Activated CD4-positive, alpha-beta T cell treated with anti-CD3 and anti-CD28 coated beads for 36 hours (primary cell): ENCODE measurements at regions of chr1 and their contacts with region 1.

Region 1: DNA sequence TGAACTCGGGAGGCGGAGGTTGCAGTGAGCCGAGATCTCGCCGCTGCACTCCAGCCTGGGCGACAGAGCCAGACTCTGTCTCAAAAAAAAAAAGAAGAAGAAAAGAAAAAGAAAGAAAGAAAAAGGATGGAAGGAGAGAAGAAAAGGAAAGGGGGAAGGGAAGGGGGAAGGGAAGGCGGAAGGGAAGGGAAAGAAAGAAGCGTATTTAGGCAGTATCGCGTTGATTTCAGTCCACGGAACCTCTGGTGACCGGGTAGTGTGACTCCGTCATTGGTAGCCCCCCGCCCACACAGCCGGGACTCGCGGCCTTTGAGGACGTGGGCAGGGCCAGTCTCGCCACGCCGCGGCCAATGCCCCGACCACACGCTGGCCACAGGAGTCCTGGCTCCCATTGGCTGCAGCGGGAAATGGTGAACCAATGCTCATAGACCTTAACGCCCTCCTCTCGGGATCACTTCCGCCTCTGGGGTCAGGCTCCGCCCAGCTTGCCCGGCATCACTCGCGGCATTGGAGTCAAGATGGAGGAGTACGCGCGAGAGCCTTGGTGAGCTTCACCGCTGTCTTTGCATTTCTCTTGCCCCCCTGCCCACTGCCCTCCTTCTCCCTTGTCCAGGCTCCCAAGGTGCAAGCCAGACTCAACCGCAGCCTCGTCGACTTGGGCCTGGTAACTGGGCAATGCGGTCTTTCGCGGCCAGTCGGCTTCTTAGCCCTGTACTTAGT is at the start of gene TIMM17A:
- DNase-seq: peak; percentile 97
- ATAC-seq: peak; percentile 100
- H3K4me3 Mint-ChIP-seq: peak within 1 kb of the TSS; percentile 99
- H3K27ac Mint-ChIP-seq: peak within 1 kb of the TSS; percentile 97
- H3K4me1 Mint-ChIP-seq: peaks cover 16% of the 10 kb centered on the region
- H3K27me3 Mint-ChIP-seq: no peaks in the 10 kb centered on the region
- total RNA-seq, gene TIMM17A: 51.9 to 70.6 TPM

Region 2: DNA sequence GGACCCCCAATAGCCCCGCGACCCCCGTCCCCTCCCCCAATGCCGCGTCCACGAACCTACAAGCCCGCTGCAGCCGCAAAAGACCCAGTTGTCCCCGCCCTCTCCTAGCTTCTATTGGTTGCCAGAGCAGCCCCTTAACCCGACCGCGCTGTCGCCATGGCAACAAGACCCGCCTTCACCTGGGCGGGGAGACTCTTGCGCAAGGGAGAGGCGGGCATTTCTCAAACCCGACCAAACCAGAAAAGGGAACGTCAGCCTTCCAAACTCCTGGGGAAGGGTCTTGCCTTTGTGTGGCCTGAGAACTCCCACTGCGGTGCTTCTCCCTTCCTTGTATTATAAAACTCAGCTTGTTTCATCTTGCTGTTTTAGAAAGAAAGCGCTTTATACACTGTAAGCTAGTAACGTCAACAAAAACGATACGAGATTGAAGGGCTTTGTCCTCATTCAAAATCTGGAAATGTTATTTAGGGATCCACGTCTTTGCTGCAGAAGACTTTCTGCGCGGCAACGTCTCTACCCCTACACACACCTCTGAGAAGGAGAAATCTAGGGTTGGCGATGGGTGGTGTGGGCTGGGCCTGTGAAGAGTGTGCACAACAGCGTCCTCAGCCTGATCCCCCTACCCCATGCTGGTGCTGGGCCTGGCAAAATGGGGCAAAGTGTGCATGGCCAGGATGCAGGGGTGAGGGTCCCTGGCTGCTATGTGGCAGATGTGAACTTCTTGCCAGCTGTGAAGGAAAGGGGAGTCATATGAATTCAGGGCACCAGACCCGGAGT is 800.6 kb before region 1 on chr1 and contains the start of gene TMEM9:
- CTCF ChIA-PET with region 1: no interaction called
- POLR2A ChIA-PET with region 1: no interaction called
- intact Hi-C with region 1: loop called in 1 of 2 experiments (anchors 1 kb)
- DNase-seq: peak; percentile 99
- ATAC-seq: peak; percentile 96
- H3K4me3 Mint-ChIP-seq: peak within 1 kb of the TSS; percentile 78
- H3K27ac Mint-ChIP-seq: peak within 1 kb of the TSS; percentile 85
- H3K4me1 Mint-ChIP-seq: peaks cover 18% of the 10 kb centered on the region
- H3K27me3 Mint-ChIP-seq: peaks cover 4% of the 10 kb centered on the region
- total RNA-seq, gene TMEM9: 15.7 to 27.2 TPM

Region 3: GRCh38 chr1:201937624-201938213 is 17.4 kb before region 1 on chr1:
- CTCF ChIA-PET with region 1: no interaction called
- POLR2A ChIA-PET with region 1: no interaction called
- intact Hi-C with region 1: no loop called
- DNase-seq: no peak
- ATAC-seq: no peak
- H3K4me3 Mint-ChIP-seq: no peak overlapping the region
- H3K27ac Mint-ChIP-seq: no peak overlapping the region
- H3K4me1 Mint-ChIP-seq: no peaks in the 10 kb centered on the region
- H3K27me3 Mint-ChIP-seq: peaks cover 8% of the 10 kb centered on the region

Region 4: GRCh38 chr1:201982623-201983379 is 27.6 kb after region 1 on chr1 and contains the start of gene RNPEP:
- CTCF ChIA-PET with region 1: interaction called, 5 read pairs
- POLR2A ChIA-PET with region 1: interaction called, 4 read pairs
- intact Hi-C with region 1: loop called (anchors 1 kb)
- DNase-seq: peak; percentile 69
- ATAC-seq: peak; percentile 82
- H3K4me3 Mint-ChIP-seq: peak within 1 kb of the TSS; percentile 86
- H3K27ac Mint-ChIP-seq: peak within 1 kb of the TSS; percentile 80
- H3K4me1 Mint-ChIP-seq: peaks cover 16% of the 10 kb centered on the region
- H3K27me3 Mint-ChIP-seq: no peaks in the 10 kb centered on the region
- total RNA-seq, gene RNPEP: 44.9 to 49.2 TPM

Region 5: DNA sequence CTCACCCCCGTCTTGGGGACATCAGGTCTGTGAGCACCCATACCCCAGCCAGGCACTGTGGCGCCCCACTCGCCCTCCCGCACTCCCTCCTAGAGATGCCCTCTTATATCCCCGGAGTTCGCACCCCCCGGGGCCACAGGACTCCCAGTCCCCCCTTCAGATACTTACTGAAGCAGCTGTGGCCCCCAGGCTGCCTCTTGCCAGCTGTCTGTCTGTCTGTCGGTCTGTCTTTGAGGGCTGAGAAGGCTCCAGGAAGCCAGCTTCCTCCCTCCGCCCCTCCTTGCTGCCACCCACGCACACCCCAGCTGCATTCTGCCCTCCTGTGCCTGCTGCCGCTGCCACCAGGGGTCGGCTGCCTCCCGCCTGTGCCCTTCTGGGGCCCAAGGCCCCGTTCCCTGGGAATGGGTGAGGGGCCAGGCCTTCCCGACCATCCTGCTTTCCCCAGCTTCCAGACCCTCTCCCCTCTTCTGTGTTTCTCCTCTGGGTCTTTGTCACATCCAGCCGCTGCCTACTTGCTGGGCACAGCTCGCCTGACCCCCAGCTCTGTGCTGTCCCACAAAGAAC is 205.3 kb after region 1 on chr1 and contains the start of gene PTPN7:
- CTCF ChIA-PET with region 1: no interaction called
- POLR2A ChIA-PET with region 1: no interaction called
- intact Hi-C with region 1: loop called in 1 of 2 experiments (anchors 1 kb)
- DNase-seq: peak; percentile 98
- ATAC-seq: peak; percentile 69
- H3K4me3 Mint-ChIP-seq: peak within 1 kb of the TSS; percentile 97
- H3K27ac Mint-ChIP-seq: peak within 1 kb of the TSS; percentile 99
- H3K4me1 Mint-ChIP-seq: peaks cover 80% of the 10 kb centered on the region
- H3K27me3 Mint-ChIP-seq: no peaks in the 10 kb centered on the region
- total RNA-seq, gene PTPN7: 188 to 221 TPM

Region 6: DNA sequence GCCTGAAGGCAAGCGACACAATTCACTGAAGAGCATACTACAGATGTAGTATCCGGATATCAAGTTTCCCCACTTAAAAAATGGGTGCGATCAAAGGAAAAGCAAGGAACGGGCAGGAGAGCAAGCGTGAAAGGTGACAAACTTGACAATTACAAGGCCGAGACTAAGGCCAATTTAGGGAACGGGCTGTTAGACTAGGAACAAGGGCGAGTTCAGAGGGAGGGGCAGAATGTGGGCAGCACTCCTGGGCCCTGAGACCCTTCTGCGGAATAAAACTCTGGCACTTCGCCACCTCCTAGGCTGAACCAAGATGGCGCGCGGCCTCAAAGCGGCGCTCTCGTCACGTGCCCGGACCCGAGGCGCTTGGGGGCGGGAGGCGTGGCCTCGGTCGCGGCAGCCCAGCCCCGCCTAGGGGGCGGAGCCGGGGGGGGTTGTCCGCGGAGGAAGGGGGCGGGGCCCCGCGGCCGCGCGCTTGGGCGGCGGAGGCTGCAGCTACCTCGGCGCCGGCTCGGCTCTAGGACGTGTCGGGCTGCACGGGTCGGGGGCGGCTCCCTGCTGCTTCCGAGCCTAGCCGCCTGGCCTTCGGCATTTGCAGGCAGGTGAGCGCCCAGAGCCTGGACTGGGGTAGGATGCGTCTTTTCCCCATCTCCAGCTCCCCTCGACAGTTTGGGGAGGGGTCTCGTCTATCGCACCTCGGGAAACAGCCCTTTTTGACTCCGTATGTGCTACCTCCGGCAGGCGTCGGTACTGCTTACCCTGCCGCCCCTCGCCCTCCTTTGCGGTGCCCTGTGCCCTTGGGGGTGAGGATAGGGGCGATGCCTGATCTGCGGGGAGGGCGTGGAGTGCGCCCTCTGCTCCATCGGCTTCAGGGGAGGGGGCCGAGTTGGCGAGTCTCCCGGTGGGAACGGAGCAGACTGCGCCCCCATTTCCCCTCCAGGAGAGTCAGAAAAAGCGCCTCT is 1071.1 kb after region 1 on chr1 and contains the start of gene PPFIA4:
- CTCF ChIA-PET with region 1: no interaction called
- POLR2A ChIA-PET with region 1: no interaction called
- intact Hi-C with region 1: loop called in 1 of 2 experiments (anchors 1 kb)
- DNase-seq: peak; percentile 95
- ATAC-seq: peak; percentile 95
- H3K4me3 Mint-ChIP-seq: peak within 1 kb of the TSS; percentile 82
- H3K27ac Mint-ChIP-seq: peak within 1 kb of the TSS; percentile 84
- H3K4me1 Mint-ChIP-seq: peaks cover 19% of the 10 kb centered on the region
- H3K27me3 Mint-ChIP-seq: peaks cover 4% of the 10 kb centered on the region
- total RNA-seq, gene PPFIA4: 51.2 to 56.4 TPM